ENCODE measurements at regions of chr16 and their contacts with region 1.

Region 1: DNA sequence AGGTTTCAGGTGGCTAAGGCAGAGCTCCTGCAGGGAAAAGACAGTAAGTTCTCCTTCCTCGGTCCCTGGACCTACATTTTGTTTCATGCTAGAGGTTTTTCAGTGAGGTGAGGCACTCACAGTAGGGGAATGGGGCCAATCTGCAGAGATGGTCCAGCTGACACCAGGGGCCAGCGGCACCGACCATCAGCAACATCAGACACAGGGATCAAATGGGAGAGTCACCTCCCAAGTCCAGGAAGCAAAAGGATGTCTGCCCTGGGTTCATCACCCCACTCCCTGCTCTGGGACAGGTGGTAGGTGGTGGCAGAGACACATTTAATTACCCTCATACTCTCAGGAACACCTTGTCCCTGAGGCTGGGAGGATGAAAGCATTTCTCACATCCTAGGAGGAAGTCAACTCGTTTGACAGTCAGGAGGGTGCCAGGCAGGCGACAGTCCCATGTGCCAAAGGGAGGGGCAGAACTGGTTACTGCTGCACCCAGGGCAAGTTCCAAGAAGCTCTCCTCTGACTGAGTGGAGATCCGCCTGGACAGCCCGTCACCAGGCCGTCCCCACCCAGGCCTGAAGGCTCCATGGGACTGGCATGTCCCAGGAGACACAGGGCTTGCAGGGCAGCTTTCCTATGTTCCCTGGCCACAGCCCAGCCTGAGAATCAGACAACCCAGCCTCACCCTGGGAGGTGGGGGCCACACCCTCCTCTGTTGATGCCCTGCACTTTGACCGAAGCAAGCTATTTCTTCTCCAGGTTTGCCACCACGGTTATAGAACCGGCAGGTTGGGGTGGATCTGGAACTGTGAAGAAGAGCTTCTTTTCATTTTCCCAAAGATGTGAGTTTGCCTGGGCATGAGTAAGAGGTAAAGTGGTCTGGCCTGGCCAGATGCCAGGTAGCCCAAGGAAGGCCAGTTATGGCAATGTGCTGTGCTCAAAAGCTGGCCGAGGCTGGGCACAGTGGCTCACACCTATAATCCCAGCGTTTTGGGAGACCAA is 19.1 kb downstream of the ATP6V0D1 start:
- DNase-seq: peak in 1 of 2 experiments; percentile 72
- H3K4me3 ChIP-seq: no peak overlapping the region
- H3K27ac ChIP-seq: no peak overlapping the region
- H3K4me1 ChIP-seq: 0 out of 2 replicates have a peak, but pooled peaks cover 5% of the 10 kb centered on the region
- H3K27me3 ChIP-seq: no peaks in the 10 kb centered on the region
- CTCF ChIP-seq: no peak

Region 2: DNA sequence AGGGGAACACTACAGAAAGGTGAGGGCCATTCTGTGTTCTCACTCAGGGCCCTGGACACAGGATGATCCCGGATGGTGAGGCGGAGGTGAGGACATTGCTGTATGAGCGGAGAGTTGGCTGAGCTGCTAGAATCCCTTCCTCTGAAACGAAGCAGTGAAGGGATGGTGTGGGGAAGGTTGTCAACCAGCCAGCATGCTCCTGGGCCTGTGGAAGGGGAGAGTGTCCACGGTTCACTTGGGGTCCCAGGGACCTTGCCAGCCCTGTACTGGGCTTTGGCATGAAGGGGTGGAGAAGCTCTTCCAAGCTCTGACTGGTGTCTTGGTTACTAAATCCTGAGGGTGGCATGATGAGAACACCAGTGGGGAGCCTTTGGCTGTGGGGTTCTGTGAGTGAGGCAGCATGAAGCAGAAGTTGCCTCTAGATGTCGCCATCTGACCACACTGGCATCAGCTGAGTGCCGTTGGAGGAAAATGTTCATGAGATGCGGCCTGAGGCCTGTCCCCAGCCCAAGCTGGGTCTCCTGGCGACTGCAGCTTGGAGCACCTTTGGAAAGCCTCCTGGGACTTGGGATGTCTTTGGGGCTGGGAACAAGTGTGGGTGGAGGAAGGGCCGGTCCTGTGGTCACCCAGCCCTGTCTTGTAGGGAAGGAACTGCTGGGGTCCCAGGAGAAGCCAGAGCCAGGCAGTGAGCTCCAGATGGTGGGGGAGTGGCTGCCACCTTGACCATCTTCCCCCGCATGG is 566.8 kb before region 1 on chr16:
- CTCF ChIA-PET with region 1: no interaction called
- POLR2A ChIA-PET with region 1: no interaction called
- intact Hi-C with region 1: loop called (anchors 10 kb)
- DNase-seq: peak in 1 of 2 experiments; percentile 66
- H3K4me3 ChIP-seq: no peak overlapping the region
- H3K27ac ChIP-seq: no peak overlapping the region
- H3K4me1 ChIP-seq: peaks cover 24% of the 10 kb centered on the region
- H3K27me3 ChIP-seq: no peaks in the 10 kb centered on the region
- CTCF ChIP-seq: peak; percentile 87

Region 3: GRCh38 chr16:66954097-66954659 is 507.7 kb before region 1 on chr16:
- CTCF ChIA-PET with region 1: no interaction called
- POLR2A ChIA-PET with region 1: no interaction called
- intact Hi-C with region 1: loop called (anchors 2 kb)
- DNase-seq: peak; percentile 55 to 81
- H3K4me3 ChIP-seq: no peak overlapping the region
- H3K27ac ChIP-seq: no peak overlapping the region
- H3K4me1 ChIP-seq: no peaks in the 10 kb centered on the region
- H3K27me3 ChIP-seq: no peaks in the 10 kb centered on the region
- CTCF ChIP-seq: peak; percentile 88

Region 4: DNA sequence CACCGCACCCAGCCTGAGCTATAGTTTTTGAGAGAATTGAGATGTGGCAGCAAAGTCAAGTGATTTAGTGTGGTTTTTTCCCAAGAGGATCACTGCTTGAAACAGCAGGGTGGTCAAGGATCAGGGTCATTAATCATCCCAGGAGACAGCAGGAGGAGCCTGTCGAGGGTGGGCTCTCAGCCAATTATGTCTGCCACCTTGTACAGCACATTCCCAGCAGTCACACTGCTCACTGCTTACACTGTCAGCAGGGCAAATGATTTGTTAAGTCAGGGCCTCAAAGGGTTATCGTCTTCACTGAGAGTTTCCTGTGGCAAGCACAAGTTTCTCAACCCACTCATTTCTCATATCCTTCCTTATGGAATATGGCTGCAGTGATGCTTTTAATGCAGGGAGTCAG is 324.3 kb before region 1 on chr16:
- CTCF ChIA-PET with region 1: interaction called, 18 read pairs
- POLR2A ChIA-PET with region 1: no interaction called
- intact Hi-C with region 1: no loop called
- DNase-seq: no peak
- H3K4me3 ChIP-seq: no peak overlapping the region
- H3K27ac ChIP-seq: no peak overlapping the region
- H3K4me1 ChIP-seq: no peaks in the 10 kb centered on the region
- H3K27me3 ChIP-seq: no peaks in the 10 kb centered on the region
- CTCF ChIP-seq: no peak

Region 5: GRCh38 chr16:67191995-67192681 is 269.8 kb before region 1 on chr16 and contains the start of gene E2F4:
- CTCF ChIA-PET with region 1: interaction called, 3 read pairs
- POLR2A ChIA-PET with region 1: no interaction called
- intact Hi-C with region 1: loop called (anchors 10 kb)
- DNase-seq: peak; percentile 80 to 87
- H3K4me3 ChIP-seq: peak within 1 kb of the TSS; percentile 92
- H3K27ac ChIP-seq: no peak within 1 kb of the TSS
- H3K4me1 ChIP-seq: peaks cover 32% of the 10 kb centered on the region
- H3K27me3 ChIP-seq: no peaks in the 10 kb centered on the region
- CTCF ChIP-seq: no peak
- total RNA-seq, gene E2F4: 78.4 and 82.5 TPM in 2 replicates

Region 6: GRCh38 chr16:67260426-67261075 is 201.3 kb before region 1 on chr16:
- CTCF ChIA-PET with region 1: interaction called, 7 read pairs
- POLR2A ChIA-PET with region 1: no interaction called
- intact Hi-C with region 1: loop called (anchors 2 kb)
- DNase-seq: peak; percentile 48 to 53
- H3K4me3 ChIP-seq: no peak overlapping the region
- H3K27ac ChIP-seq: no peak overlapping the region
- H3K4me1 ChIP-seq: no peaks in the 10 kb centered on the region
- H3K27me3 ChIP-seq: no peaks in the 10 kb centered on the region
- CTCF ChIP-seq: peak; percentile 61

Measured in PC-9 (cell line).